Heart left ventricle (tissue), 16 donors: ENCODE measurements at regions of chr11 and their contacts with region 1.

Region 1: DNA sequence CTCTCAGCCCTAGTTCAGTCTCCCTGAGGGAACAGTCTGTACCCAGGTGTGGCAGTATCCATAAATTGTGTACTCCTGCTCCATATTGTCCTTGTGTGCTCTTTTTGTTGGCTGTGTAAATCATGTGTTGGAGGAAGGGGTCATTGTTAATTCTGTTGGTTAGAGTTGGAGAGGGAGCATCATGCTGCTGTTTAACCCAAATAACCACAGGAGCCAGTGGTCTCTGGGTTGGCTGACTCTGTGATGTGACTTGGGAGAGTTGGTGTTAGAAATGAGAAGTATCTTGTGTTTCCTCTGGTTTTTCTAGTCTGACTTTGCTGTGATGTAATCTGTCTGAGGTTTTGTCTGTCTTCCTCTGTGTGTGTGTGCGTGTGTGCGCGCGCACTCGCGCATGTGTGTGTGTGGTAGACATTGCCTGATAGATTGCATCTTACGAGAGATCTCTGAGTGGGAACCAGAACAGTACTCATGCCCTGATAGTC is 30.5 kb downstream of the CTNND1 start:
- DNase-seq: peak; percentile 43 to 92 (median 71)
- ATAC-seq: peak; percentile 45 to 74 (median 61)
- H3K4me3 ChIP-seq: peak overlapping the region in 7 of 12 donors; percentile 8 to 32 (median 17)
- H3K27ac ChIP-seq: peak overlapping the region; percentile 49 to 89 (median 66)
- H3K4me1 ChIP-seq: peaks cover 7 to 80% (median 68%) of the 10 kb centered on the region in 12 donors
- H3K27me3 ChIP-seq: no peaks in the 10 kb centered on the region
- CTCF ChIP-seq: no peak
- POLR2A ChIP-seq: no peak

Region 2: DNA sequence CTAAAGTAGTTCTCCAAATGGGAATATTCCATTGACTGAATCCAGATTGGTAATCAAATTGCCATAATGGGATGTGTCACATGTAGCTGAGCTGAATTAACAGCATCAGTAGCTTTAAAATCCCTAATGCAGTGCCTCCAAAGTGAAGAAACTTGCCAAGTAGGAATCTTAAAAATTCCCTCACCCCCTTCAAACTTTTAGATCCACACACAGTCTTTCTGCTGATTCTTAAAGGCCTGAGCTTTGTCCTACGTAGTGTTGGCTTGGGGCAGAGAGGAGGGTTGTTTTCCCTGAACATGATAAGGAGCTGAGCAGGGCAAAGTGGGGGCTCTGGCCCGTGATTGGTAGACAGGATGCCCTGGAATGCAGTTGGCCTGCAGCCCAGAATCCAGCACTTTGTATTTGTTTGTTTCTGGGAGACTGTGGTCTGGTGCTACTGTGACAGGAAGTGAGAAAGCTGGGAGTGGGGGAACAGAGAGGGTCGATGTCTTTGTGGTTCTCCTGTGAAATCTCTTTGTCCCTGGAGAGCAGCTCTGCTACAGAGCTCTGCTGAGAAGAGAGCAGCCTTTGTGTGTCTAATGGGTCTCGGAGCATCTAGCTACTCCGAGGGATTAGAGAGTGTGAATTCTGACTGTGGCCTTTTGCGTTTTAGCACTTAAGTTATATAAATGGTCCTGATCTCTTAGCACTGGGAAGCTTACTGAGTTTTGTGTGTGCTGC is 13.6 kb before region 1 on chr11:
- intact Hi-C with region 1: loop called in 1 of 10 experiments (anchors 2 kb)
- DNase-seq: peak; percentile 91 to 97 (median 94)
- ATAC-seq: peak; percentile 90 to 94 (median 92)
- H3K4me3 ChIP-seq: peak overlapping the region in 11 of 12 donors; percentile 7 to 51 (median 23)
- H3K27ac ChIP-seq: peak overlapping the region; percentile 77 to 97 (median 91)
- H3K4me1 ChIP-seq: peaks cover 28 to 100% (median 96%) of the 10 kb centered on the region in 12 donors
- H3K27me3 ChIP-seq: no peaks in the 10 kb centered on the region
- CTCF ChIP-seq: no peak
- POLR2A ChIP-seq: peak in 1 of 2 donors; percentile 45